ENCODE measurements at regions of chr16 and their contacts with region 1.

Region 1: DNA sequence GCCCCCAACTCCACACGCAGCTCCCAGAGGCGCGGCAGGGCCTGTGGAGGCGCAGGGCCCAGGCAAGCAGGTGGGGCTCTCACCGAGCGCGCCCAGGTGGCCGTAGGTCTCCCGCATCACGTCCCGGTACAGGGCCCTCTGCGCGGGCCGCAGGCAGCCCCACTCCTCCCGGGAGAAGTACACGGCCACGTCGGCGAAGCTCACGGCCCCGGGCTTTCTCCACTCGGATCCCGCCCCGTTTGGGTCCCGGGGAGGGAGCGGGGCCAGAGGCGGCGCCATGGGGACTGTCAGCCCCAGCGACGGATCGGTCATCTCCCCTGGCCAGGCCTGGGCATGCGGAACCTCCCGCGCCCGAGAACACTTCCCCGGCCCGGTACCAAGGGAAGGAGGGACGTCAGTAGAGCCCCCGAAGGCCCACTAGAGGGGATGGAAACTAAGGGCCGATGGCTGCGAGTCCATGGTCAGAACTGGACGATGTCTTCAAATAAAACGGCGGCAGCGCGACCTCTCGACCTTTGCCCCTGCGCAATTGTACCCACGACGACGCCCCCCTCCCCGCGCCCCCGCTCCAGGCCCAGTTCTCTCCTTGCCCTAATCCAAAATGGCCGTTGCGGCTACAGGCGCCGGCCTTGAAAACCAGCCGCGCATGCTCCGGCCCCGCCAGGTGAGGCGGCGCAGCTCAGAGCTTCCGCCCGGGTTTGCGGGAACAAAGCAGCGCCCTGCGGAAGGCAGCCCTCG is at the start of gene ZNF747:
- DNase-seq: peak; percentile 51
- ATAC-seq: peak; percentile 89
- H3K4me3 ChIP-seq: peak within 1 kb of the TSS; percentile 90
- H3K27ac ChIP-seq: peak within 1 kb of the TSS; percentile 85
- H3K4me1 ChIP-seq: no peaks in the 10 kb centered on the region
- H3K27me3 ChIP-seq: no peaks in the 10 kb centered on the region
- CTCF ChIP-seq: peak in 1 of 3 experiments; percentile 1; a peak in 1 of 6 replicates
- EP300 ChIP-seq: no peak
- POLR2A ChIP-seq: peak; percentile 76
- RAD21 ChIP-seq: no peak
- polyA plus RNA-seq, gene ZNF747: 1.0 to 1.2 TPM

Region 2: DNA sequence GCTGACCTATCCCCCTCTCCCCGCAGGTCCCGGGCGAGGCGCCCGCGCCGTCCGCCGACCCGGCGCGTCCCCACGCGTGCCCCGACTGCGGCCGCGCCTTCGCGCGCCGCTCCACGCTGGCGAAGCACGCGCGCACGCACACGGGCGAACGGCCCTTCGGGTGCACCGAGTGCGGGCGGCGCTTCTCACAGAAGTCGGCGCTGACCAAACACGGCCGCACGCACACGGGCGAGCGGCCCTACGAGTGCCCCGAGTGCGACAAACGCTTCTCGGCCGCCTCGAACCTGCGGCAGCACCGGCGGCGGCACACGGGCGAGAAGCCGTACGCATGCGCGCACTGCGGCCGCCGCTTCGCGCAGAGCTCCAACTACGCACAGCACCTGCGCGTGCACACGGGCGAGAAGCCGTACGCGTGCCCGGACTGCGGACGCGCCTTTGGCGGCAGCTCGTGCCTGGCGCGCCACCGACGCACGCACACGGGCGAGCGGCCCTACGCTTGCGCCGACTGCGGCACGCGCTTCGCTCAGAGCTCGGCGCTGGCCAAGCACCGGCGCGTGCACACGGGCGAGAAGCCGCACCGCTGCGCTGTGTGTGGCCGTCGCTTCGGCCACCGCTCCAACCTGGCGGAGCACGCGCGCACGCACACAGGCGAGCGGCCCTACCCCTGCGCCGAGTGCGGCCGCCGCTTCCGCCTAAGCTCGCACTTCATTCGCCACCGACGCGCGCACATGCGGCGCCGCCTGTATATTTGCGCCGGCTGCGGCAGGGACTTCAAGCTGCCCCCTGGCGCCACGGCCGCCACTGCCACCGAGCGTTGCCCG is 116.8 kb before region 1 on chr16:
- CTCF ChIA-PET with region 1: interaction called, 6 read pairs
- POLR2A ChIA-PET with region 1: interaction called, 4 read pairs
- RAD21 ChIA-PET with region 1: interaction called, 9 read pairs
- SMC1A ChIA-PET with region 1: interaction called, 10 read pairs
- in situ Hi-C with region 1: no loop called
- intact Hi-C with region 1: no loop called
- DNase-seq: peak; percentile 84
- ATAC-seq: peak; percentile 97
- H3K4me3 ChIP-seq: peak overlapping the region; percentile 69
- H3K27ac ChIP-seq: peak overlapping the region; percentile 47
- H3K4me1 ChIP-seq: peaks cover 8% of the 10 kb centered on the region
- H3K27me3 ChIP-seq: no peaks in the 10 kb centered on the region
- CTCF ChIP-seq: peak in 2 of 3 experiments; percentile 29 to 33; a peak in 3 of 6 replicates
- EP300 ChIP-seq: peak in 1 of 2 experiments; percentile 33; a peak in 1 of 4 replicates
- POLR2A ChIP-seq: peak; percentile 84; the same call in 1 of the 2 replicates
- RAD21 ChIP-seq: no peak

Region 3: GRCh38 chr16:30472328-30472942 is 62.1 kb before region 1 on chr16 and contains the start of gene ITGAL:
- CTCF ChIA-PET with region 1: interaction called, 15 read pairs
- POLR2A ChIA-PET with region 1: interaction called, 7 read pairs
- RAD21 ChIA-PET with region 1: interaction called, 15 read pairs
- SMC1A ChIA-PET with region 1: interaction called, 18 read pairs
- in situ Hi-C with region 1: no loop called
- intact Hi-C with region 1: no loop called
- DNase-seq: peak; percentile 98
- ATAC-seq: peak; percentile 67
- H3K4me3 ChIP-seq: peak within 1 kb of the TSS; percentile 96
- H3K27ac ChIP-seq: peak within 1 kb of the TSS; percentile 90
- H3K4me1 ChIP-seq: peaks cover 40% of the 10 kb centered on the region
- H3K27me3 ChIP-seq: no peaks in the 10 kb centered on the region
- CTCF ChIP-seq: no peak
- EP300 ChIP-seq: peak; percentile 86 to 95; a peak in 3 of 4 replicates
- POLR2A ChIP-seq: peak; percentile 81
- RAD21 ChIP-seq: peak; percentile 3; the same call in 1 of the 2 replicates
- polyA plus RNA-seq, gene ITGAL: 10.7 to 12.1 TPM

Region 4: DNA sequence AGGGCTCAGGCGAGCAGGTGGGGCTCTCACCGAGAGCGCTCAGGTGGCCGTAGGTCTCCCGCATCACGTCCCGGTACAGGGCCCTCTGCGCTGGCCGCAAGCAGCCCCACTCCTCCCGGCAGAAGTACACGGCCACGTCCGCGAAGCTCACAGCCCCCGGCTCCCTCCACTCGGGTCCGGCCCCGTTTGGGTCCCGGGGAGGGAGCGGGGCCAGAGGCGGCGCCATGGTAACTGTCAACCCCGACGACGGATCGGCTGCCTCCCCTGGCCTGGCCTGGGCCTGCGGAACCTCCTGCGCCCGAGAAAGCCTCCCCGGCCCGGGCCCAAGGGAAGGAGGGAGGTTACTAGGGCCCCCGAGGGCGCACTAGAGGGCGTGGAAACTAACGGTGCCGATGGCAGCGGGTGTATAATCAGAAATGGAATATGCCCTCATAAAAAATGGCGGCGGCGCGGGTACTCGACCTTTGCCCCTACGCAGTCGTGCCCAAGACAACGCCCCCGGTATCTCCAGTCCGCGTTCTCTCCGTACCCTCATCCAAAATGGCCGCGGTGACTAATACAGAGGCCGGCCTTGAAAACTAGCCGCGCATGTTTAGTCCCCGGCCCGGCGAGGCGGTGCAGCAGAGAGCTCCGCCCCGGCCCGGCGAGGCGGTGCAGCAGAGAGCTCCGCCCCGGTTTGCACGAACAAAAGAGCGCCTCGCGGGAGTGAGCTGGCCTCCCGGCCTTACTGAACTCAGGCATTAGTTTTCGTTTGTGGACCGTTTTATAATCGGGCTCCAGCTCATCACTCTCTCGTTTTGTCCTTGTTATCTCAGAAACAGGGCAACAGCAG is 23.6 kb after region 1 on chr16 and contains the start of gene ZNF764:
- CTCF ChIA-PET with region 1: interaction called, 59 read pairs
- POLR2A ChIA-PET with region 1: interaction called, 109 read pairs
- RAD21 ChIA-PET with region 1: interaction called, 99 read pairs
- SMC1A ChIA-PET with region 1: interaction called, 47 read pairs
- in situ Hi-C with region 1: no loop called
- intact Hi-C with region 1: loop called (anchors 1 kb)
- DNase-seq: peak; percentile 84
- ATAC-seq: peak; percentile 96
- H3K4me3 ChIP-seq: peak within 1 kb of the TSS; percentile 87
- H3K27ac ChIP-seq: peak within 1 kb of the TSS; percentile 85
- H3K4me1 ChIP-seq: no peaks in the 10 kb centered on the region
- H3K27me3 ChIP-seq: no peaks in the 10 kb centered on the region
- CTCF ChIP-seq: peak; percentile 1 to 9 (median 2); a peak in 1 of 6 replicates
- EP300 ChIP-seq: no peak
- POLR2A ChIP-seq: peak; percentile 68
- RAD21 ChIP-seq: no peak
- polyA plus RNA-seq, gene ZNF764: 0.61 to 1.6 TPM

Region 5: DNA sequence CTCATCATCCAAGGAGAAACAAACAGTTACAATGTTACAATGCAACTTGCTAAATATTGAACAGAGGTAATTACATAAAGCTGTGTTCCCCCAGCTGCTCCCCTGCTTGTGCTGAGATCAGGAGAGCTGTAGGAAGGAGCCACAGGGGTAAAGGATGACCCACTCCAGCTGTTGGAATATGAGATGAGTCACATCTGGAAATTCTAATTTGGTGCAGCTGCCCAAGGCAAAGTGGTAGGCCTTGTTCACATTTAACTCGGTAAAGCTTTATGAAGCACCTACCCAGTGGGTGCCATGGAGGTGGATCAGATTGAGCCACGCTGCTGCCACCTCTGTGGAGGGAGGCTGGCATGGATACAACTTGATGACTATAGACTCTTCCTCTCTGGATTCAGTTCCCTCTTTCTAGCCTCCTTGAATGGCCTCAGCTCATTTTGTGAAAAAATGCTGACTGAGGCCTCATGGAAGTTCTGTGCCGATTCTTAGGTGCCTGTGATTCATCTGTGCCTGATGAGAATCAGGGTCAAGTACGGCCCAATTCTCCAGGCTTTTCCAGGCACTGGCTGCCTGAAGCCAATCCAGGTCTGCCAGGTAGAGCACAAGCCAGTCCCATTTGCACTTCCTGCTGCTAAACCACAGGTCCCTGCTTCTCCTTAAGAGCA is 68.2 kb after region 1 on chr16:
- CTCF ChIA-PET with region 1: interaction called, 43 read pairs
- POLR2A ChIA-PET with region 1: interaction called, 3 read pairs
- RAD21 ChIA-PET with region 1: interaction called, 13 read pairs
- SMC1A ChIA-PET with region 1: interaction called, 15 read pairs
- in situ Hi-C with region 1: no loop called
- intact Hi-C with region 1: no loop called
- DNase-seq: no peak
- ATAC-seq: no peak
- H3K4me3 ChIP-seq: no peak overlapping the region
- H3K27ac ChIP-seq: no peak overlapping the region
- H3K4me1 ChIP-seq: no peaks in the 10 kb centered on the region; the same call in 1 of the 2 replicates
- H3K27me3 ChIP-seq: no peaks in the 10 kb centered on the region
- CTCF ChIP-seq: no peak
- EP300 ChIP-seq: no peak
- POLR2A ChIP-seq: 0 out of 2 replicates have a peak, but pooled peaks have one; percentile 10
- RAD21 ChIP-seq: no peak

Region 6: GRCh38 chr16:30657866-30658730 is 123.6 kb after region 1 on chr16 and contains the start of gene FBRS:
- CTCF ChIA-PET with region 1: interaction called, 10 read pairs
- POLR2A ChIA-PET with region 1: interaction called, 8 read pairs
- RAD21 ChIA-PET with region 1: interaction called, 7 read pairs
- SMC1A ChIA-PET with region 1: interaction called, 7 read pairs
- in situ Hi-C with region 1: no loop called
- intact Hi-C with region 1: no loop called
- DNase-seq: peak; percentile 99
- ATAC-seq: peak; percentile 81
- H3K4me3 ChIP-seq: peak within 1 kb of the TSS; percentile 89
- H3K27ac ChIP-seq: peak within 1 kb of the TSS; percentile 98
- H3K4me1 ChIP-seq: peaks cover 22% of the 10 kb centered on the region
- H3K27me3 ChIP-seq: no peaks in the 10 kb centered on the region
- CTCF ChIP-seq: peak; percentile 72 to 99 (median 75); a peak in 5 of 6 replicates
- EP300 ChIP-seq: no peak
- POLR2A ChIP-seq: peak; percentile 84
- RAD21 ChIP-seq: peak; percentile 35; the same call in 1 of the 2 replicates
- polyA plus RNA-seq, gene FBRS: 0.45 to 0.95 TPM

Measured in GM12878 (cell line).